GM10248 (cell line): ENCODE measurements at regions of chr15 and their contacts with region 1.

Region 1: DNA sequence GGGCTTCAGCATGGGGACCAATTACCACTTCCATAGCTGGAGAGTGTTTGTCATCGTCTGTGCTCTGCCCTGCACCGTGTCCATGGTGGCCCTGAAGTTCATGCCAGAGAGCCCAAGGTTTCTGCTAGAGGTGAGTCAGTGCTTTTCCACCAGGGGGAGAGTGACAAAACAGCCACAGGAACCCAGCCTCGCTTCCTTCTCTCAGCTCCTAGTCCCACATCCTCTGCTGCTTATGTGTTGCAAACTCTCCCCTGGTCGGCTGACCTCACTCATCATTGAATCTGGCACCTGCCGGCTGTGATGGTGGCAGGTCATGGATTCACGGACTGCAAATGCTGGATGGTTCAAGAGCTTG is 158.3 kb downstream of the SV2B start:
- DNase-seq: no peak
- CTCF ChIP-seq: no peak

Region 2: DNA sequence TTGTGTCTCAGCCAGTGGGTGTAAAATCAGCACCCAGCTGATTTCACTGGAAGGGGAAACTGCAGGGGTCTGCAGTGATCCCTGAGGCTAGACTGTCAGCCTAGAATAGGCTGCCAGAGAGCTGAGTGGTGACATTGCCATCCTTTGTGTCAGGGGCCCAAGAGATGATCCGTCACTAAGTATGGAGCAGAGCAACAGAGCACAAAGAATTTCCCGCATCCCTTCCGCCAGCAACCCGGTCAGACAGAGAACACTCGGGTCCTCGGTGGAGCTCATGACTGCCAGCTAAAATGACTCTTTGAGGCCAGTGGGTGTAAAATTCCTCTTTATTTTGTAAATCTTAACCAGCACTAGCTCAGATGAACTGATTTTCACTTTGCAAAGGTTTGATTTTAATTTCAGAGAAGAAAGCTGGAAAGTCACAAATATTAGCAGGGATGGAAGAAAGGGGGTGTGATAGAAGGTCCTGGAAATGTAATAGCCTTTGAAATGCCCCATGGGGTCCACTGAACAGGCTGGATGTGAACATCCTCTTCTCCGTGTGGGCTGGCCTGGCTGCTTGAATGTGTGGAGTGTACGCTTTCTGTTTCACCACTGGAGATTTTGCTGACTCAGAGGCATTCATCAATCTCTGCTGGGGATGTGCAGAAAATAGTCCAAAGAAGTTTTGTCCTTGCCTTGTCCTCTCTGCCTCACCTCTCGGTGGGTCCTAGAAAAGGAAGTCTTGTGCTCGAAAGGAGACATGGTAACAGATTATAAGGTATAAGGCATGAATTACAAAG is 19.6 kb before region 1 on chr15:
- CTCF ChIA-PET with region 1: interaction called, 12 read pairs
- POLR2A ChIA-PET with region 1: no interaction called
- DNase-seq: no peak
- CTCF ChIP-seq: no peak

Region 3: GRCh38 chr15:91393186-91393585 is 134.8 kb after region 1 on chr15:
- CTCF ChIA-PET with region 1: no interaction called
- POLR2A ChIA-PET with region 1: no interaction called
- DNase-seq: no peak
- CTCF ChIP-seq: no peak